ENCODE measurements at regions of chr1 and their contacts with region 1.

Region 1: GRCh38 chr1:182789138-182790076 is at the start of gene NPL:
- DNase-seq: peak; percentile 87
- H3K4me3 ChIP-seq: peak within 1 kb of the TSS; percentile 77
- H3K27ac ChIP-seq: peak within 1 kb of the TSS; percentile 64
- H3K4me1 ChIP-seq: peaks cover 15% of the 10 kb centered on the region
- H3K27me3 ChIP-seq: no peaks in the 10 kb centered on the region
- CTCF ChIP-seq: no peak
- total RNA-seq, gene NPL: 5.3 TPM

Region 2: GRCh38 chr1:182084487-182085316 is 704.7 kb before region 1 on chr1:
- intact Hi-C with region 1: loop called (anchors 10 kb)
- DNase-seq: peak; percentile 86
- H3K4me3 ChIP-seq: no peak overlapping the region
- H3K27ac ChIP-seq: no peak overlapping the region
- H3K4me1 ChIP-seq: peaks cover 5% of the 10 kb centered on the region
- H3K27me3 ChIP-seq: no peaks in the 10 kb centered on the region
- CTCF ChIP-seq: peak; percentile 85

Region 3: DNA sequence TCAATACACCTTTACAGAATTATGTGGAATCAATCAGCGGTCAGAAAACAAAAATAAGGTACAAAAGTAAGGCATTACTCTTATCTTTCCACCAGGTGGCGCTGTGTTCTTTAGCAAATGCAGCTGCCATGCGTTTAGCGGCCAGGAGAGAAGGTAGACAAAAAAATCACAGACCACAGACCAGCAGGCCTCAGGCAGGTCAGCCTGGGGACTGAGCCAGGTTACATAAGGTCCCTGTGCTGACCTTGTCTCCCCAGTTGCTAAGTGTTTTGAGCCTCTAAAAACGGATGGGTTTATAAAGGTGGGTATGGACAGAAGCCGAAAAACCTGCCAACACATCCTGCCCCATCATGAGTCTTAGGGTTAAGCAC is 188.0 kb before region 1 on chr1:
- intact Hi-C with region 1: loop called (anchors 2 kb)
- DNase-seq: peak; percentile 45
- H3K4me3 ChIP-seq: peak overlapping the region; percentile 73
- H3K27ac ChIP-seq: peak overlapping the region; percentile 69
- H3K4me1 ChIP-seq: peaks cover 63% of the 10 kb centered on the region
- H3K27me3 ChIP-seq: no peaks in the 10 kb centered on the region
- CTCF ChIP-seq: peak; percentile 83

Region 4: DNA sequence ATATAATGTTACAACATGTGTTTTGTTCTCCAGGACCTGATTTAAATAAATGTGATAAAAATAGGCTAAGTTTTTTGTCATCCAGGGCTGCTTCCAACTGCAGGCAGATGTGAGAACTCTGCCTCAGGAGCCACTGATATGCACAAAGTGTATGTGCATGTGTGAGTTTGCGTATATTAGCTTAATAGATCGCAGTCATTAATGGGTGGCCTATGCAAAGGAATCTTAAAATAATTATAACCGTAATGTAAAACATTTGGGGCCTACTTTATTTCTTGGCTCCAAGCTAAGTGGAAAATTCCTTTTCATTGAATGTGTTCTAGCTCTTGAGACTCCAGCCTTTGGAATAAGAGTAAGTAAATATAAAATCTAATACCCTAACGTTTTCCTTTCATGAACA is 66.5 kb after region 1 on chr1:
- intact Hi-C with region 1: no loop called
- DNase-seq: no peak
- H3K4me3 ChIP-seq: no peak overlapping the region
- H3K27ac ChIP-seq: no peak overlapping the region
- H3K4me1 ChIP-seq: peaks cover 8% of the 10 kb centered on the region
- H3K27me3 ChIP-seq: no peaks in the 10 kb centered on the region
- CTCF ChIP-seq: no peak

Measured in left ventricle myocardium inferior (tissue), 1 donor.